ENCODE measurements at regions of chr1 and their contacts with region 1.

Region 1: DNA sequence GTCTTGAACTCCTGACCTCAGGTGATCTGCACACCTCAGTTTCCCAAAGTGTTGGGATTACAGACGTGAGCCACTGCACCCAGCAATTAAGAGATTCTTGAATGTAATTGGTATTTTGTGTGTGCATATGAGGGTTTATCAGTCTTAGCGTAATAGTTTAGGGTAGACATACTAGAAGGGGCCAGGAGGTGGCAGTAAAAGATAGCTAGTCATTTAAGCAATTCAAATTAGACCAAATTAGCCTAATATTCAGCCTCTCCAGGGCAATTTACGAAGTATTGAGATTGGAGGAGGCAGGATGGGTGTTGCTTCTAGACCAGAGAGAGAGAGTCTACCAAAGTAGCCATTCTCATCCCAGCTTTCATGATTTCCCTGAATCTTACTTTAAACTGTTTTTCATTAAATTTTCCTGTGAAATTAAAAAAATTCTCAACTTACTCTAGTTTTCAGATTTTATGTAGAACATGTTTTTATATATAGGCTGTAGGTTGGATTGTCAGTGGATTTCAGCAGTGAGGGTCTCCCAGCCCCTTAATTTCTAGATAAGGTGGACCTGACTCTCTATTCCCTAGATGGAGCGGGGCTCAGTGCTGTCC is 119.7 kb downstream of the HHAT start:
- DNase-seq: peak; percentile 74
- H3K4me3 ChIP-seq: no peak overlapping the region
- H3K27ac ChIP-seq: no peak overlapping the region
- H3K4me1 ChIP-seq: peaks cover 6% of the 10 kb centered on the region
- H3K27me3 ChIP-seq: no peaks in the 10 kb centered on the region
- CTCF ChIP-seq: peak; percentile 73

Region 2: DNA sequence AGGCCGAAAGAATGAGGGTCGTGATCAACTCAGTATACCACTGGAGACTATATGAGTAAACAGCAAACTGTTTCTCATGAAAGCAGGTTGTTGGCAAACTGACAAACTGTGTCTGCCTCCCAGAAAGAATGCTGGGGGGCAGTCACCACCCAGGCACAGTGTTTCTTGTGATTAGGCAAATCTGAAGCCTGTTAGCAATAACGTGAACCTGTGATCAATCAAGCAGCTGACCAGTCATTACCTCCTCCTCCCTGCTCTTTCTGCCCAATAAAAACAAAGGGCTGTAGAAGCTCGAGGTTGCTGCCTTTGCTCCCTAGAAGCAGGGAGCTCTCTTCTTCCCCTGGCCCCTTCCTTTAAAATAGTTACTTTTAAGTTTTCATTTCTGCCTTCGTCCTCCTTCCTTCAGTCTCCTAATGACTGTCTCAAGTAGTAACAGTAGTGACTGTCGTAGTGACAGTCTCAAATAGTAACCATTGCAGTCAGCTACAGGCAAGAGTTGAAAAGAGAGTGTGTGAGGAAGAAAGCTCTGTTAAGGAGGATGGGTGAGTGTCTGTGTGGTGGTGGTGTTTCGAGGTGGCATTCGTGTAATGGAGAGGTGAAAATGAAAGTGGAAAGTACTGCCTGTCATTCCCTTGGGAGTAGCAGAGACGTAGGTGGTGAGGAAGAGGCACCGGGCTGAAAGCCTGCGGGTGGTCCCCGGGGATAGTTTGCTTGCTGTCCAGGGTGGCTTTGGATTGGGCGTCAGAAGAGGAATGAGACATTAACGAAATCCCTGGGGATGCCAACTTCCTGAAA is 105.2 kb before region 1 on chr1:
- CTCF ChIA-PET with region 1: no interaction called
- POLR2A ChIA-PET with region 1: no interaction called
- intact Hi-C with region 1: no loop called
- DNase-seq: peak; percentile 94
- H3K4me3 ChIP-seq: peak overlapping the region; percentile 33
- H3K27ac ChIP-seq: peak overlapping the region; percentile 77
- H3K4me1 ChIP-seq: peaks cover 23% of the 10 kb centered on the region
- H3K27me3 ChIP-seq: no peaks in the 10 kb centered on the region
- CTCF ChIP-seq: no peak

Region 3: DNA sequence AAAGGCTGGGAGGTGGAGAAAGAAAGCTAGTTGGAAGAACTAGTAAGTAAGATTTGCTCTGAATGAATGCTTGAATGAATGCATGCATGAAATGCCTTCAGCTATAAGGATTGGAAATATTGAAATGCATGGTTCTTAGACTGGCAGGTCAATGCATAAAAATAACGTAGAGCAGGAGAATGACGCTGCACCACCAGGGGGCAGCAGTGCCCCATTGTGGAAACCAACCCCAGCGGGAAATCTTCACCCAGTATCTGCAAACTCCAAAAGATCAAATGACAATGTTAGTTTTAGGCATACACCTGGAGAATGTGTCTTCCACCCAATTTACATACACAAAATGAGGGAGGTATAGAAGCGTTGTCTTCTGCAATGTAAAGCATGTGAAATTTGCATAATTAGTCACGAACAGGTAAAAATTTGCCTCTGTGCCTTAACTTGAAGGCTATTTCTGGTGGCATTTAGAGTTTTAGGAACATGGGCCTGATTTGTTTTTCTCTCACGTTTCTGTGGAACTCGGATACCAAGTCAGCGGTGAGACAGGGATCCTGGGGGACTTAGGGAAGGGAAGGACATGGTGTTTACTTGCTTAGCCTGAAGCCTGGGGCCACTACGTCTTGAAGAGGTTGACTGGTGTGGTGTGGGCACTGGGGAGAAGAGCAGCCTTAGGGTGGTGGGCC is 41.0 kb before region 1 on chr1:
- CTCF ChIA-PET with region 1: interaction called, 3 read pairs
- POLR2A ChIA-PET with region 1: no interaction called
- intact Hi-C with region 1: loop called (anchors 2 kb)
- DNase-seq: peak; percentile 80
- H3K4me3 ChIP-seq: no peak overlapping the region
- H3K27ac ChIP-seq: no peak overlapping the region
- H3K4me1 ChIP-seq: no peaks in the 10 kb centered on the region
- H3K27me3 ChIP-seq: peaks cover 3% of the 10 kb centered on the region
- CTCF ChIP-seq: peak; percentile 98

Region 4: GRCh38 chr1:210496063-210496462 is 47.7 kb after region 1 on chr1:
- CTCF ChIA-PET with region 1: no interaction called
- POLR2A ChIA-PET with region 1: no interaction called
- intact Hi-C with region 1: no loop called
- DNase-seq: no peak
- H3K4me3 ChIP-seq: no peak overlapping the region
- H3K27ac ChIP-seq: no peak overlapping the region
- H3K4me1 ChIP-seq: no peaks in the 10 kb centered on the region
- H3K27me3 ChIP-seq: peaks cover 3% of the 10 kb centered on the region
- CTCF ChIP-seq: no peak

Region 5: GRCh38 chr1:211133836-211134669 is 685.7 kb after region 1 on chr1 and contains the start of gene KCNH1:
- CTCF ChIA-PET with region 1: interaction called, 65 read pairs
- POLR2A ChIA-PET with region 1: no interaction called
- intact Hi-C with region 1: loop called (anchors 1 kb)
- DNase-seq: peak; percentile 91
- H3K4me3 ChIP-seq: peak within 1 kb of the TSS; percentile 28
- H3K27ac ChIP-seq: no peak within 1 kb of the TSS
- H3K4me1 ChIP-seq: peaks cover 9% of the 10 kb centered on the region
- H3K27me3 ChIP-seq: peaks cover 76% of the 10 kb centered on the region
- CTCF ChIP-seq: peak; percentile 85
- total RNA-seq, gene KCNH1: not detected in 2 replicates